AG04450 (cell line): ENCODE measurements at regions of chr13 and their contacts with region 1.

Region 1: GRCh38 chr13:105410602-105411001 is 1124.9 kb downstream of the EFNB2 start:
- DNase-seq: no peak
- H3K4me3 ChIP-seq: peak overlapping the region; percentile 37
- H3K27ac ChIP-seq: no peak overlapping the region
- H3K27me3 ChIP-seq: no peaks in the 10 kb centered on the region
- CTCF ChIP-seq: peak; percentile 70

Region 2: GRCh38 chr13:105426441-105426840 is 15.8 kb after region 1 on chr13:
- CTCF ChIA-PET with region 1: interaction called, 17 read pairs
- POLR2A ChIA-PET with region 1: no interaction called
- DNase-seq: no peak
- H3K4me3 ChIP-seq: no peak overlapping the region
- H3K27ac ChIP-seq: no peak overlapping the region
- H3K27me3 ChIP-seq: no peaks in the 10 kb centered on the region
- CTCF ChIP-seq: no peak

Region 3: GRCh38 chr13:105463011-105463501 is 52.5 kb after region 1 on chr13:
- CTCF ChIA-PET with region 1: no interaction called
- POLR2A ChIA-PET with region 1: no interaction called
- DNase-seq: no peak
- H3K4me3 ChIP-seq: no peak overlapping the region
- H3K27ac ChIP-seq: no peak overlapping the region
- H3K27me3 ChIP-seq: no peaks in the 10 kb centered on the region
- CTCF ChIP-seq: no peak

Region 4: DNA sequence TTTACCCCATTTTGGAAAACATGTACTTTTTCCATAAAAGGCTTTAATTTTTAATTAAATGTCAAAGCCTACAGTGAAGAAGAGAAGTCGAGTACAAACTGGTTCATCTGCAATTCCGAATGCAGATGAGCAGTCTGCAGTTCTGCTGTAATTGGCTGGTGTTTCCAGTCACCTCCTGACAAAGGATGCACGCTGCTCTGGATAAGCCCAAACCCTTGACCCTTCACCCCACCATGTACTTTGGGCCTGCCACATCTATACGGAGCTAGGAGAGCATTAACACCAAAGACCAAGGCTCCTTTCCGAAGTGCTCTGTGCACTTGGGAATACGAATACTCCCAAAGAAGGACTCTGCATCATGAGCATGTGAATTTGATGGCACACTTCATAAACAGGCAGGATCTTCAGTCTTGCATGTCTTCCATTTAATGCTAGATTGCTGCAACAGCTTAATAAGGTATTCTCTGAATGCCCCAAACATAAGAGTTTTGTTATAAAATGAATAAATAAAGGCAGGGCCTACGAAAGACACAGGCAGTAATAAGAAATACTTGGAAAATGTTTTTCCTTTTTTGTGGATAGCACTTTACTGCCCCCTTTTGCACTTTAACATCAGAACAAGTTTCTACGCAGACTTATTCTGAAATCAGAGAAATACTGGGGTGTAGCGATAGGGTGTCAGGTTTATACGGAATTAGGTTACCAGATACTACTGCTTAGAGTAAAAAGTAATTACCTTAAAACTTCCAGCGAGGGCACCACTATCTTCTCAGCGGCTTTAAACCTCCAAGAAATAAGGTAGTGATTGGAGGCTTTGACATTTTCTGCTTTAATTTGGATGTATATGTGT is 1109.8 kb after region 1 on chr13:
- CTCF ChIA-PET with region 1: interaction called, 13 read pairs
- POLR2A ChIA-PET with region 1: no interaction called
- DNase-seq: no peak
- H3K4me3 ChIP-seq: no peak overlapping the region
- H3K27ac ChIP-seq: no peak overlapping the region
- H3K27me3 ChIP-seq: no peaks in the 10 kb centered on the region
- CTCF ChIP-seq: peak; percentile 73